Endothelial cell of umbilical vein (primary cell): ENCODE measurements at regions of chr12 and their contacts with region 1.

Region 1: DNA sequence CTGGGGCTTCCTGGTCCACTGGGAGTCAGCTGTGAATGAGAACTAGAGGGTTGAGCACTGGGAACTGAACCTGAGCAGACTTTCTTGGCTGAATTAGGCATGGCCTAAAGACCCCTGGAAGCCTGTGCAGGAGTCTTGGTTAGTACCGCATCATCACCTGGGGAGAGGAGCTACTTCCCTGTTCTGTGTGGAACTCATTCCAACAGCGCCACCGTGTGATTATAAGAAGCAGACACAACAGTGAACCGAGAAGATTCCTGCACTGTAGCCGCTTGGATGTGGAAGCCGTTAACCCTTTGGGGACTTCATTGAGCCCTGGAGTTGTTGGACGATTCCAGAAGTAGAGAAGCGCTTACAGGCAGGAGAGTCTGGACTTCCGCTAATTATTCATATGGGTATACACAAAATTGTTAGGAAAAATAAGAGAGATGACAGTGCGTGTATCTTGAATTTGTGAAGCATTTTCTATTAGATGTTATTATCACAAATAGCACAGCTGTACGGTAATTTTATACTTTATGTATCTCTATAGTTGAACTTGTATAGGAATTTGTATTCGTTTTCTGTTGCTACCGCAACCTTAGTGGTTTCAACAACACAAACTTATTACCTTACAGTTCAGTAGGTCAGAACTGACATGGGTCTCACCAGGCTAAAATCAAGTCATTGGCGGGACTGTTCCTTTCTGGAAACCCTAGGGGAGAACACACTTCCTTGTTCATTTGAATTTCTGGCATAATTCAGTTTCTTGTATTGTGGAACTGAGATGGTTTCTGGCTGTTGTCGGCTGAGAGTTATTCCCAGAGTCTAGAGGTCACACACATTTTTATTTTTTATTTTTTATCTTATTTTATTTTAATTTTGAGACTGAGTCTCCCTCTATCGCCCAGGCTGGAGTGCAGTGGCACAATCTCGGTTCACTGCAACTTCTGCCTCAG is 100.7 kb downstream of the C2CD5 start:
- DNase-seq: peak; percentile 67
- H3K4me3 ChIP-seq: no peak overlapping the region
- H3K27ac ChIP-seq: no peak overlapping the region
- H3K4me1 ChIP-seq: no peaks in the 10 kb centered on the region
- H3K27me3 ChIP-seq: peaks cover 0 to 4% of the 10 kb centered on the region in 2 experiments
- CTCF ChIP-seq: peak; percentile 58 to 67
- POLR2A ChIP-seq: no peak

Region 2: GRCh38 chr12:22069856-22070565 is 373.6 kb before region 1 on chr12:
- CTCF ChIA-PET with region 1: interaction called, 12 read pairs
- POLR2A ChIA-PET with region 1: no interaction called
- dilution Hi-C with region 1: no loop called
- intact Hi-C with region 1: no loop called
- DNase-seq: no peak
- H3K4me3 ChIP-seq: no peak overlapping the region
- H3K27ac ChIP-seq: no peak overlapping the region
- H3K4me1 ChIP-seq: no peaks in the 10 kb centered on the region
- H3K27me3 ChIP-seq: peaks cover 0 to 2% of the 10 kb centered on the region in 2 experiments
- CTCF ChIP-seq: no peak
- POLR2A ChIP-seq: no peak

Region 3: GRCh38 chr12:22100958-22101748 is 342.5 kb before region 1 on chr12:
- CTCF ChIA-PET with region 1: interaction called, 52 read pairs
- POLR2A ChIA-PET with region 1: no interaction called
- dilution Hi-C with region 1: no loop called
- intact Hi-C with region 1: loop called (anchors 1 kb)
- DNase-seq: peak; percentile 57
- H3K4me3 ChIP-seq: no peak overlapping the region
- H3K27ac ChIP-seq: no peak overlapping the region
- H3K4me1 ChIP-seq: peaks cover 4% of the 10 kb centered on the region
- H3K27me3 ChIP-seq: peaks cover 3 to 6% of the 10 kb centered on the region in 2 experiments
- CTCF ChIP-seq: peak; percentile 42 to 77
- POLR2A ChIP-seq: no peak